ENCODE measurements at regions of chrX and their contacts with region 1.

Region 1: GRCh38 chrX:136626237-136626636 is 21.7 kb upstream of the CD40LG start:
- DNase-seq: no peak
- ATAC-seq: peak; percentile 39
- H3K4me3 Mint-ChIP-seq: peak overlapping the region; percentile 11
- H3K27ac Mint-ChIP-seq: peak overlapping the region; percentile 87
- H3K4me1 Mint-ChIP-seq: peaks cover 88% of the 10 kb centered on the region
- H3K27me3 Mint-ChIP-seq: no peaks in the 10 kb centered on the region
- CTCF ChIP-seq: no peak

Region 2: DNA sequence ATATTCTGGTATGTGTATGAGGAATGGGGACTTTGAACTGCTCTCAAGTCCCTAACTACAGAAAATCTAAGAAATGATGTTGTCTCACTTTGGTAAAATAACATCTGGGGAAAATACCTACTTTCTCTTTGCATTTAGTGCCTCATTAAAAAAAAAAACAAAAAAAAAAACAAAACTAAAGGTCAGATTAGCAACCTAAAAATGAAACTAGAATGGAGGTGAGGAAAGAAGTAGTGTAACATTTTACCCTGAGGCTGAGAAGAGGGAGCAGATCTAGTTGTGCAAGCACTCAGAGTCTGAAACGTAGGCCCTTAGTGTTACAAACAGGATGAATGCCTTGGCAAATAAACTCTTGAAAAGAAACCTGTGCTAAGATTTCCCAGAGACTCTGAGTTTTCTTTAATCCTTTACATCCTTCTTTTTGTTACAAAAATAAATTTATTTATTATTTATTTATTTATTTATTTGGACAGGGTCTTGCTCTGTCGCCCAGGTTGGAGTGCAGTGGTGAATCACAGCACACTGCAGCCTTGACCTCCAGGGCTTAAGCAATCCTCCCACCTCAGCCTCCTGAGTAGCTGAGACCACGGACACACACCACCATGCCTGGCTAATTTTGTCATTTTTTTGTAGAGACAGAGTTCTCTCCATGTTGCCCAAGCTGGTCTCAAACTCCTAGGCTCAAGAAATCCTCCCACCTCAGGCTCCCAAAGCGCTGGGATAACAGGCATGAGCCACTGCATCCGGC is 38.0 kb before region 1 on chrX:
- CTCF ChIA-PET with region 1: interaction called, 6 read pairs
- POLR2A ChIA-PET with region 1: interaction called, 8 read pairs
- intact Hi-C with region 1: loop called (anchors 5 kb)
- DNase-seq: no peak
- ATAC-seq: peak; percentile 69
- H3K4me3 Mint-ChIP-seq: peak overlapping the region; percentile 32
- H3K27ac Mint-ChIP-seq: peak overlapping the region; percentile 84
- H3K4me1 Mint-ChIP-seq: peaks cover 60% of the 10 kb centered on the region
- H3K27me3 Mint-ChIP-seq: no peaks in the 10 kb centered on the region
- CTCF ChIP-seq: no peak

Region 3: GRCh38 chrX:136689436-136689835 is 63.2 kb after region 1 on chrX:
- CTCF ChIA-PET with region 1: interaction called, 3 read pairs
- POLR2A ChIA-PET with region 1: no interaction called
- intact Hi-C with region 1: loop called (anchors 5 kb)
- DNase-seq: peak; percentile 22
- ATAC-seq: no peak
- H3K4me3 Mint-ChIP-seq: peak overlapping the region; percentile 21
- H3K27ac Mint-ChIP-seq: peak overlapping the region; percentile 80
- H3K4me1 Mint-ChIP-seq: peaks cover 65% of the 10 kb centered on the region
- H3K27me3 Mint-ChIP-seq: no peaks in the 10 kb centered on the region
- CTCF ChIP-seq: no peak

Measured in activated CD8-positive, alpha-beta T cell treated with anti-CD3 and anti-CD28 coated beads for 36 hours (primary cell).